ENCODE measurements at regions of chr7 and their contacts with region 1.

Region 1: DNA sequence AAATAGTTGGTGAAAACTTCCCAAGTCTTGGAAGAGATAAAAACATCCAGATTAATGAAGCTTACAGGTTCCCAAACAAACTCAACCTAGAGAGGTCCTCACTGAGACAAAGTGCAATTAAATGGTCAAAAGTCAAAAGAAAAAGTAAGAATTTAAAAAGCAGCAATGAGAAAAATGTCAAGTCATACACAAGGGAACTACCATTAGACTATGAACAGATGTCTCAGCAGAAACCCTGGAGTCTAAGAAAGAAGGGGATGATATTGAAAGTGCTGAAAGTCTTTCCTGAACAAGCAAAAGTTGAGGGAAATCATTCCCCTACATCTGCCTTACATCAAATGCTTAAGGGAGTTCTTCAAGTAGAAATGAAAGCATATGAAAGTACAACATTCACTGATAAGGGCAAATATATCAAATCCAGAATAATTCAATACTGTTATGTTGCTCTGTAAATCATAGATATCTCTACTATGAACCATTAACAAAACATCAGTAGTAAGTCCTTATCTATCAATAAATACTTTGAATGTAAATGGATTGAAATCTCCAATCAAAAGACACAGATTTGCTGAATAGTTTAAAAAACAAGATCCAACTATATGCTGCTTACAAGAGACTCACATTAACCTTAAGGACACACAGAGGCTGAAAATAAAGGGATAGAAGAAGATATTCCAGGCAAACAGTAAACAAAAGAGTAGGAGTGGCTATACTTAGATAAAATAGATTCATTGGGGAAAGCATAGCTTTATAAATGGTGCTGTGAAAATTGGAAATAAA is 449.5 kb downstream of the PHTF2 start:
- DNase-seq: no peak
- H3K4me3 ChIP-seq: no peak overlapping the region
- H3K4me3 Mint-ChIP-seq: no peak overlapping the region
- H3K27ac ChIP-seq: no peak overlapping the region
- H3K27ac Mint-ChIP-seq: no peak overlapping the region
- H3K4me1 ChIP-seq: no peaks in the 10 kb centered on the region
- H3K4me1 Mint-ChIP-seq: no peaks in the 10 kb centered on the region
- H3K27me3 ChIP-seq: no peaks in the 10 kb centered on the region
- H3K27me3 Mint-ChIP-seq: peaks cover 0 to 1% of the 10 kb centered on the region in 2 donors

Region 2: GRCh38 chr7:78218051-78218450 is 30.0 kb before region 1 on chr7:
- CTCF ChIA-PET with region 1: no interaction called
- POLR2A ChIA-PET with region 1: no interaction called
- intact Hi-C with region 1: loop called (anchors 1 kb)
- DNase-seq: no peak
- H3K4me3 ChIP-seq: no peak overlapping the region
- H3K4me3 Mint-ChIP-seq: no peak overlapping the region
- H3K27ac ChIP-seq: no peak overlapping the region
- H3K27ac Mint-ChIP-seq: no peak overlapping the region
- H3K4me1 ChIP-seq: no peaks in the 10 kb centered on the region
- H3K4me1 Mint-ChIP-seq: no peaks in the 10 kb centered on the region
- H3K27me3 ChIP-seq: no peaks in the 10 kb centered on the region
- H3K27me3 Mint-ChIP-seq: peaks cover 5 to 9% of the 10 kb centered on the region in 2 donors

Measured in CD4-positive, alpha-beta memory T cell (primary cell).